ENCODE measurements at regions of chr10 and their contacts with region 1.

Region 1: GRCh38 chr10:94362360-94363250 is at the start of gene NOC3L:
- DNase-seq: peak; percentile 97
- ATAC-seq: peak; percentile 100
- total RNA-seq, gene NOC3L: 8.1 TPM

Region 2: GRCh38 chr10:94402015-94402842 is 39.6 kb after region 1 on chr10 and contains the start of gene TBC1D12:
- intact Hi-C with region 1: loop called (anchors 2 kb)
- DNase-seq: peak; percentile 97
- ATAC-seq: peak; percentile 99
- total RNA-seq, gene TBC1D12: 4.6 TPM

Region 3: DNA sequence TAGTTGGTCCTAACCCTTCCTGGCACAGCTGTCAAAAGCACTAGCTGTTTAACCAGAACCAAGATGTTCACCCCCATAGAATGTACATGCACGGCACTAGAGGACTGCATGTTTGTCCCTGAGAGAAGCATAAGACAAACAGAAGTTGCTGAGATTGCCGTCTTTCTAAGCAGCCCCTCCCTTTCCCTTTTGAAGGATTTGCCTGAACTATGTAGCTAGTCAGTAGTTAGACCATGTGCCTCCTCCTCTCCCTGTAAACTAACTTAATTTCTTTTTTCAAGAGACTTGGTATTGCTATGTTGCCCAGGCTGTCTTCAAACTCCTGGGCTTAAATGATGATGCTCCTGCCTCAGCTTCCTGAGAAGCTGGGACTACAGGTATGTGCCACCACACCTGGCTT is 80.4 kb after region 1 on chr10:
- intact Hi-C with region 1: loop called (anchors 2 kb)
- DNase-seq: no peak
- ATAC-seq: no peak

Region 4: DNA sequence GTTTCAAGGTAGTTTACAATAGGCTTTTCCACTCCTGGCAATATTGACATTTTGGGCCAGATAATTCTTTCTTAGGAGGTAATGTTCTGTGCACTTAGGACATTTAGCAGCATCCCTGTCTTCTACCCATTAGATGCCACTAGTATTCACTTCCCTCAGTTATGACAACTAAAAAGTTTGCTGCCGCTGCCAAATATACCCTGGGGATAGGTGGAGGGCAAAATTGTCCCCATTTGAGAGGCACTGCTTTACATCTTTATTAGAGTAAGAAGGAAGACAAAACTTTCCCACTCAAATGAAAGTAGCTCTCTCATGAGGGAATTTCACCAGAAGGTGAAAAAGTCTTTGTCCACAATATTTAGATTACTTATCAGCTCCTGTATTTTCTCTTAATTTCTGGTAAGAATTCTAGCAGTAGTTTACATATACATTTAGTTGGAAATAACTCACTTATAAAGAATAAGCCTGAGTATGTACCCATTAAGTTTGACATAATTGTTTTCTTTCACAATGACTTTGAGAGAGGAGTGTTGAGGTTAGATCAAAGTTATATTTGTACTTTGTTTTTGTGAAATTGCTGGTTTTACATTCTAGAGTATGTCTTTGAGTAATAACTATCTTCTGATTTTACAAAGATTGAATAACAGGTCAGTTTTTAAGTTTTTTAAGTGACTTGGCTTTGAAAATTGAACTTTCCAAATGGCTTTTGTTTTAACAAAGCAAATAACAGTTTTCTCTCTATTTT is 229.0 kb after region 1 on chr10:
- intact Hi-C with region 1: no loop called
- DNase-seq: no peak
- ATAC-seq: no peak